GM12878 (cell line): ENCODE measurements at regions of chr12 and their contacts with region 1.

Region 1: DNA sequence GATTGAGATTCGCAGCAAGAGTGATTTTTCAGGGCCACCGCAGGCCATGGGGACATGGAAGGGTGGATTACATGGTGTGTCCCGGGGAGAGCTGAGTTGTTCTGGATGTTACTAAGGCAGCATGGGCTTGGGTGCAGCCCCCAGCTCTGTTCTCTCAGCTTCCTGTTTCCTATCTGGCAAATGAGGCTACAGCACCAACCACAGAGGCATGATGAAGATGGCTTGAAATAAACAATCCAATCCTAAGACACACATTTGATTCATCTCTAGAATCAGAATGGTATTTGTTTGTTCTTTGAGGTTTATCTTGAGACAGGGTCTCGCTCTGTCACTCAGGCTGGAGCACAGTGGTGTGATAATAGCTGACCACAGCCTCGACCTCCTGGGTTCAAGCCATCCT is 21.6 kb downstream of the GLTP start:
- DNase-seq: no peak
- ATAC-seq: no peak
- H3K4me3 ChIP-seq: no peak overlapping the region
- H3K27ac ChIP-seq: no peak overlapping the region
- H3K4me1 ChIP-seq: no peaks in the 10 kb centered on the region
- H3K27me3 ChIP-seq: no peaks in the 10 kb centered on the region
- CTCF ChIP-seq: no peak
- EP300 ChIP-seq: no peak
- POLR2A ChIP-seq: no peak
- RAD21 ChIP-seq: no peak

Region 2: GRCh38 chr12:109880016-109880931 is 21.5 kb after region 1 on chr12 and contains the start of gene GLTP:
- CTCF ChIA-PET with region 1: interaction called, 55 read pairs
- POLR2A ChIA-PET with region 1: no interaction called
- RAD21 ChIA-PET with region 1: interaction called, 28 read pairs
- SMC1A ChIA-PET with region 1: interaction called, 47 read pairs
- in situ Hi-C with region 1: no loop called
- intact Hi-C with region 1: loop called (anchors 2 kb)
- DNase-seq: no peak
- ATAC-seq: peak; percentile 91
- H3K4me3 ChIP-seq: peak within 1 kb of the TSS; percentile 97
- H3K27ac ChIP-seq: no peak within 1 kb of the TSS; the same call in 1 of the 2 replicates
- H3K4me1 ChIP-seq: peaks cover 26% of the 10 kb centered on the region
- H3K27me3 ChIP-seq: no peaks in the 10 kb centered on the region
- CTCF ChIP-seq: peak; percentile 43 to 86 (median 50); a peak in 4 of 6 replicates
- EP300 ChIP-seq: no peak
- POLR2A ChIP-seq: peak; percentile 75
- RAD21 ChIP-seq: peak; percentile 78
- polyA plus RNA-seq, gene GLTP: 19.8 to 20.3 TPM

Region 3: DNA sequence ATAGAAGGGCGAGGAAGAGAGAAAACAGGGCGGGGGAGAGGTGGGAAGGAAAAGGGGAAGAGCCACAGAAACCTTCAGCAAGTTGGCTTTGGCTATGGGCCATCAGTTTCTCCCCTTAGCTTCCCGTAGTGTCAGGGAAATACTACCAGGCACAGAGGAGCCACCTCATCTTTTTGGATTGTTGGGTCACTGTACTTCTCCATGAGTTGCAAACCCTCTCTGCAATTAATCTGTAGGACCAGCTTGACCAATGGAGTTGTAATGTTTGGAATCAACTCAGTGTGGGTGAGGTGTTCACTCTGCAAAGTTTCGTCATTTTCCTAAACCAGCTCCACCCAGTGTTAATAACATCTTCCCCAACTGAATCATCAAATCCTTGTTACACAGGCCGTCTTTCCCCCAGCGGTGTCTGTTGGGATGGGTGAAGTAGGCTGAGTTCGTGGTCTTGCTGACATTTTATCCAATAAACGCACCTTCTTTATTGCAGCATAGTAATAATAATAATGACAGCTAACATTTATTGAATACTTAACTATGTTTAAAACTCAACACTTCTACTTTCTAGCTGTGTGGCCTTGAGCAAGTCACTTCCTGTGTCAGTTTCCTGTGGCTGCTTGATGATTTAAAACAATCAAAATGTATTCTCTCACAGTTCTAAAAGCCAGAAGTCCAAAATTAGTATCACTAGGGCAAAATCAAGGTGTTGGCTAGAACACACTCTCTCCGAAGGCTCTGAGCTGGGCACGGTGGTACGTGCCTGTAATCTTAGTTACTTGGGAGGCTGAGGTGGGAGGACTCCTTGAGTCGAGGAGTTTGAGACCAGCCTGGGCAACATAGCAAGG is 29.6 kb after region 1 on chr12:
- CTCF ChIA-PET with region 1: interaction called, 20 read pairs
- POLR2A ChIA-PET with region 1: no interaction called
- RAD21 ChIA-PET with region 1: interaction called, 4 read pairs
- SMC1A ChIA-PET with region 1: interaction called, 14 read pairs
- in situ Hi-C with region 1: no loop called
- intact Hi-C with region 1: no loop called
- DNase-seq: peak; percentile 45
- ATAC-seq: peak; percentile 63
- H3K4me3 ChIP-seq: no peak overlapping the region
- H3K27ac ChIP-seq: peak overlapping the region; percentile 86
- H3K4me1 ChIP-seq: peaks cover 45% of the 10 kb centered on the region
- H3K27me3 ChIP-seq: no peaks in the 10 kb centered on the region
- CTCF ChIP-seq: no peak
- EP300 ChIP-seq: no peak
- POLR2A ChIP-seq: no peak
- RAD21 ChIP-seq: no peak

Region 4: DNA sequence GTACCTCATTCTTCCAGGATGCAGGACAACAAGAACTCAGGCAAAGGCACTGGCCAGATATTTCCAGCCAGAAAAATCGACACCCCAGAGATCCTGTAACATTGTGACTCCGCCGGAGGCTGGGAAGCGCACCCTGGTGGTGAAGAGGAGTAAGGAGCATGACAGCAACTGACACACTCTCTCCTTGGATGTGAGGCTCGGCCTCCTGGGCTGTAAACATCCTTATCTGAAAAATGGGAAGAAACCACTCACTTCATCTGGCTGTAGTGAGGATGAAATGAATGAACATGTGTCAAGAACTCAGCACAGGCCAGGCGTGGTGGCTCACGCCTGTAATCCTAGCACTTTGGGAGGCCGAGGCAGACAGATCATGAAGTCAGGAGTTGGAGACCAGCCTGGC is 68.9 kb after region 1 on chr12:
- CTCF ChIA-PET with region 1: interaction called, 15 read pairs
- POLR2A ChIA-PET with region 1: no interaction called
- RAD21 ChIA-PET with region 1: interaction called, 3 read pairs
- SMC1A ChIA-PET with region 1: interaction called, 6 read pairs
- in situ Hi-C with region 1: no loop called
- intact Hi-C with region 1: loop called (anchors 5 kb)
- DNase-seq: no peak
- ATAC-seq: peak; percentile 82
- H3K4me3 ChIP-seq: no peak overlapping the region
- H3K27ac ChIP-seq: no peak overlapping the region
- H3K4me1 ChIP-seq: no peaks in the 10 kb centered on the region
- H3K27me3 ChIP-seq: no peaks in the 10 kb centered on the region
- CTCF ChIP-seq: peak; percentile 41 to 59 (median 55)
- EP300 ChIP-seq: no peak
- POLR2A ChIP-seq: no peak
- RAD21 ChIP-seq: peak; percentile 43